ENCODE measurements at regions of chr17 and their contacts with region 1.

Region 1: DNA sequence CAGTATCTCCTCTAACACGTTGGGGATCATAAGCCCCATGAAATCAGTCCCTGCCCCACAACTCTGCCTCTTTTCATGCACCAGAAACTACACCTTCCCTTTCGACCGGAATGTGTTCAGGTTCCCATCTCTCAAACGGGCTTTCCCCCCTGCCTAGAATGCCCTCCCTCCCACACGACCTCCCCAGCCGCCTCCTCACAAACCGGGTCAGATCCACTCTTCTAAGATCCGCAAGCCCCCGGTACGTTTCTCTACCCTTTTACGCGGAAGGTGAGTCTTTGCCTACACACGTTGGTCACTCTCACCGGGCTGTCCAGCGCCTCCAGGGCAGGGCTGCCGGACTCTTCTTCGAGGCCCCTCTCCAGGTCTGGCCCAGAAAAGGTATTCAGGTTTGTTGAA is 708 bp downstream of the DHX33 start:
- DNase-seq: no peak
- ATAC-seq: peak; percentile 19
- H3K4me3 ChIP-seq: peak overlapping the region; percentile 92 to 94
- H3K27ac ChIP-seq: peak overlapping the region; percentile 83
- H3K4me1 ChIP-seq: peaks cover 0 to 17% of the 10 kb centered on the region in 2 experiments; a peak in 2 of 4 replicates
- H3K27me3 ChIP-seq: no peaks in the 10 kb centered on the region
- CTCF ChIP-seq: no peak
- POLR2A ChIP-seq: no peak
- RAD21 ChIP-seq: no peak

Region 2: DNA sequence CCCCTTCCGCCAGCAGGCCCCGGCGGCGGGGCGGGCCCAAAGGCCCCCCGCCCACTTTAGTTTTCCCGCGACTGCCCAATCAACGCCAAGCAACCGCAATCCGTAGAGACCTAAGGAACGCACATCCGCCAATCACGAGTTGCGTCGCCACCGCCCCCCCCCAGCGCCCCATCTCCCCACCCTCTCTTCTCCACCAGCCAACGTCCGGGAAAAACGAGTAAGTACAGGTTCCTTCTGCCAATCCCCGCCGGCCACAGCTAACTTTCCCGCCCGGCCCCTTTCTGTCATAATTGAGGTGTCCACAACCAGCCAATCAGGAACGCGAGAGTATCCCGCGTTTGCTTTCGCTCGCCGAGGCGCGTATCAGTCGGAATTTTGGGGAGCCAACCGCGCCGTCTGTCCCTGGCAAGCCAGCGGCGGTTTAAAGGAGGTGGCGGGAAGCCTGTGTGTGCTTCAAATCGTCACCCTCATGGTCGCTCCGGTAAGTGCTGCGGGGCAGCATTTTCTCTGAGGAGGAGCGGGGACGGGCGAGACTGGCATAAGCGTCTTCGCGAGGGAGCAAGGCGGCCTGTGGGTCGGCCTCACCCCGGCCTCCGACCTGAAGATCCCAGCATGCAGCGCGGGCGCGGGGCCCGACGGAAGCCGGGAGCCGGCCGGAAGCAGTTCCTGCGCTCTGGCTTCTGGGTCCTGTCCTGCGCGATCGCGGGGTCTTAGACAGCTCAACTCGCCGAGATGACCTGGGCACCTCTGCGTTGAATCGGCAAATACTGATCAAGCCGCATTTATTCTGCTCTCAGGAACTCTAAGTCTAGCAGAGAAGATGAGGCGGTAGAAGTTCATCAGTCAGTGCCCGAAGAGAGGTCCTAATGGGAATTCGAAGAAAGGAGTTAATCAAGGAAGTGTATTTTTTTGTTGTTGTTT is 18.4 kb after region 1 on chr17 and contains the start of gene MIS12:
- CTCF ChIA-PET with region 1: no interaction called
- POLR2A ChIA-PET with region 1: interaction called, 11 read pairs
- RAD21 ChIA-PET with region 1: no interaction called
- intact Hi-C with region 1: loop called (anchors 1 kb)
- DNase-seq: peak; percentile 97
- ATAC-seq: peak; percentile 87
- H3K4me3 ChIP-seq: peak within 1 kb of the TSS; percentile 90 to 93
- H3K27ac ChIP-seq: peak within 1 kb of the TSS; percentile 89
- H3K4me1 ChIP-seq: peaks cover 13 to 20% of the 10 kb centered on the region in 2 experiments
- H3K27me3 ChIP-seq: no peaks in the 10 kb centered on the region
- CTCF ChIP-seq: no peak
- POLR2A ChIP-seq: peak; percentile 53
- RAD21 ChIP-seq: no peak
- total RNA-seq, gene MIS12: 14.7 TPM

Measured in HCT116 (cell line).